CD4-positive, alpha-beta T cell (primary cell): ENCODE measurements at regions of chr1 and their contacts with region 1.

Region 1: GRCh38 chr1:24486331-24487065 is 16.1 kb upstream of the RCAN3 start:
- DNase-seq: peak in 12 of 14 experiments; percentile 24 to 84 (median 38)
- ATAC-seq: peak; percentile 46
- H3K4me3 ChIP-seq: peak overlapping the region; percentile 12
- H3K4me3 Mint-ChIP-seq: peak overlapping the region; percentile 77
- H3K27ac ChIP-seq: peak overlapping the region; percentile 43 to 68
- H3K27ac Mint-ChIP-seq: peak overlapping the region; percentile 98
- H3K4me1 ChIP-seq: peaks cover 78% of the 10 kb centered on the region
- H3K4me1 Mint-ChIP-seq: peaks cover 77% of the 10 kb centered on the region
- H3K27me3 ChIP-seq: no peaks in the 10 kb centered on the region
- H3K27me3 Mint-ChIP-seq: no peaks in the 10 kb centered on the region
- CTCF ChIP-seq: peak; percentile 7

Region 2: DNA sequence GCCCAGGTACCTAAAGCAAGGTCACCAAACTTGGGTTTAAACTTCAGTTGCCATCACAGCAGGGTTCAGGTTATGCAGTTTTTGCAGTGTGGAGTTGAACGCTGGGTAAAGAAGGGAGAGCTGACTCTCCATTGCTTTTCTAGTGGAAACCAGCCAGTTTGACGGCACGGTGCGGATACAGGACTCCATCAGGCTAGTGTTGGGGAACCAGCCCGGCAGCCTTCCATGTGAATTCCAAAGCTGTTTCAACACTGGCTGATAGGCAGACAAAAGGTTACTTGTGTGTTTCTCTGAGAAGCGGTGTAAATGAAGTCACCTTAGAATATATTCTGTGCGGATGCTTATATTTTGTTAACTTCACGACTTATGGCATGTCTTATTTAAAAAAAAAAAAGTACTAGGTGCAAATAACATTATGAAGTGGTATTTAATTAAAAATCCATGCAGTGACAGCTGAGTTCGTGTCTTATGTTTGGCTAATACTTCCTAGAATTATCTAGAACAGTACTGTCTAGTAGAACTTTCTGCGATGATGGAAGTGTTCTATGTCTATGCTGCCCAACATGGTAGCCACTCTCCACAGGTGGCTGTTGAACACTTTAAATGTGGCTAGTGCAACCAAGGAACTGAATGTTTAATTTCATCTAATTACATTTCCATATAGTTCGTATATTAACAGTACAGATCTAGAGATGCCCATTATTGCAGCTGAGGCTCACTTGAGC is 13.8 kb before region 1 on chr1:
- CTCF ChIA-PET with region 1: interaction called, 3 read pairs
- POLR2A ChIA-PET with region 1: interaction called, 16 read pairs
- intact Hi-C with region 1: no loop called
- DNase-seq: no peak
- ATAC-seq: no peak
- H3K4me3 ChIP-seq: no peak overlapping the region
- H3K4me3 Mint-ChIP-seq: no peak overlapping the region
- H3K27ac ChIP-seq: no peak overlapping the region
- H3K27ac Mint-ChIP-seq: peak overlapping the region; percentile 55
- H3K4me1 ChIP-seq: peaks cover 2% of the 10 kb centered on the region
- H3K4me1 Mint-ChIP-seq: peaks cover 51% of the 10 kb centered on the region
- H3K27me3 ChIP-seq: no peaks in the 10 kb centered on the region
- H3K27me3 Mint-ChIP-seq: no peaks in the 10 kb centered on the region
- CTCF ChIP-seq: no peak

Region 3: DNA sequence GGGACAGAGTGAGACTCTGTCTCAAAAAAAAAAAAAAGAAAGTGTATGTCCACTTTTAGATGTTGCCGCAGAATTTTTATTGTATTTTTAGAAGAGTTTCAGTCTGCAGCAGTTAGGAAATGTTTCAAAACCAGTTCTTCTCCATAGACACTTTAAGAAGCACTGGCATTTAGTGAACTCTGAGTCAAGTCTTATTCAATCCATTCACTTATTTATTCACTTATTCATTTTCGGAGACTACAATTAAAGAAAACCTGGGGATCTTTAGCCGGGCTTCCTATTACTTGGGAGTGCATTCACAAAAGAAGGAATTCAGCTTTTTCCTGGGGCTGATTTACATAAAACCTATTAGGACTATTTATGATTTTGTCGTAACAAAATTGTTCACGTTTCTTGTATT is 28.4 kb after region 1 on chr1:
- CTCF ChIA-PET with region 1: interaction called, 4 read pairs
- POLR2A ChIA-PET with region 1: interaction called, 692 read pairs
- intact Hi-C with region 1: no loop called
- DNase-seq: no peak
- ATAC-seq: no peak
- H3K4me3 ChIP-seq: no peak overlapping the region
- H3K4me3 Mint-ChIP-seq: no peak overlapping the region
- H3K27ac ChIP-seq: no peak overlapping the region
- H3K27ac Mint-ChIP-seq: peak overlapping the region; percentile 96
- H3K4me1 ChIP-seq: peaks cover 76% of the 10 kb centered on the region
- H3K4me1 Mint-ChIP-seq: peaks cover 81% of the 10 kb centered on the region
- H3K27me3 ChIP-seq: no peaks in the 10 kb centered on the region
- H3K27me3 Mint-ChIP-seq: no peaks in the 10 kb centered on the region
- CTCF ChIP-seq: no peak

Region 4: GRCh38 chr1:24526940-24527542 is 40.5 kb after region 1 on chr1:
- CTCF ChIA-PET with region 1: interaction called, 5 read pairs
- POLR2A ChIA-PET with region 1: interaction called, 11 read pairs
- intact Hi-C with region 1: loop called in 1 of 2 experiments (anchors 10 kb)
- DNase-seq: peak in 13 of 14 experiments; percentile 22 to 75 (median 42)
- ATAC-seq: peak; percentile 78
- H3K4me3 ChIP-seq: no peak overlapping the region
- H3K4me3 Mint-ChIP-seq: peak overlapping the region; percentile 45
- H3K27ac ChIP-seq: no peak overlapping the region
- H3K27ac Mint-ChIP-seq: peak overlapping the region; percentile 64
- H3K4me1 ChIP-seq: peaks cover 49% of the 10 kb centered on the region
- H3K4me1 Mint-ChIP-seq: peaks cover 76% of the 10 kb centered on the region
- H3K27me3 ChIP-seq: no peaks in the 10 kb centered on the region
- H3K27me3 Mint-ChIP-seq: no peaks in the 10 kb centered on the region
- CTCF ChIP-seq: peak; percentile 78

Region 5: DNA sequence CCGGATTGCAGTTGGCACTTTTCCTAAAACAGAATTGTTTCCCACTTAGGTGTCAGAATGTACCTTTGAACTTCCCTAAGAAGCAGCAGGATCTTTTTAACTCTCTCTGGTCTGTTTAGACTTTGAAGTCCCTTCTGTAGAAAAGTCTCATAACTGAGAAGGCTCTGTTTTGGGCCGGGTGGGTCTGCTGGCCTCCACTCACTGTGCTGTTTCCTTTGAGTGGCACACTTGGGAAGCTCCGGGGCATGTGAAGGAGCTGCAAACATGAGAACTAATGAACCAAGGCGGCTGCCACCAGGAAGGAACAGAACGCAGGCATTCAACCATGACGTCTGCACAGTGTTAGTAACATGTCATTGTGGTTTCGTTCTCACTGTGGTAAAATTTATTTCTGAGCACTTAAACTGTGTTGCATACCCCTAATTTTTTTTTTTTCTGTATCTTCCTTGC is 49.9 kb after region 1 on chr1:
- CTCF ChIA-PET with region 1: no interaction called
- POLR2A ChIA-PET with region 1: interaction called, 7 read pairs
- intact Hi-C with region 1: loop called (anchors 1 to 10 kb)
- DNase-seq: peak; percentile 41 to 94 (median 64)
- ATAC-seq: peak; percentile 80
- H3K4me3 ChIP-seq: no peak overlapping the region
- H3K4me3 Mint-ChIP-seq: peak overlapping the region; percentile 86
- H3K27ac ChIP-seq: peak overlapping the region; percentile 86 to 95
- H3K27ac Mint-ChIP-seq: peak overlapping the region; percentile 96
- H3K4me1 ChIP-seq: peaks cover 43% of the 10 kb centered on the region
- H3K4me1 Mint-ChIP-seq: peaks cover 79% of the 10 kb centered on the region
- H3K27me3 ChIP-seq: no peaks in the 10 kb centered on the region
- H3K27me3 Mint-ChIP-seq: no peaks in the 10 kb centered on the region
- CTCF ChIP-seq: no peak

Region 6: GRCh38 chr1:25148673-25149300 is 662.3 kb after region 1 on chr1:
- CTCF ChIA-PET with region 1: no interaction called
- POLR2A ChIA-PET with region 1: no interaction called
- intact Hi-C with region 1: no loop called
- DNase-seq: peak in 8 of 14 experiments; percentile 4 to 66 (median 28)
- ATAC-seq: peak; percentile 41
- H3K4me3 ChIP-seq: no peak overlapping the region
- H3K4me3 Mint-ChIP-seq: no peak overlapping the region
- H3K27ac ChIP-seq: no peak overlapping the region
- H3K27ac Mint-ChIP-seq: no peak overlapping the region
- H3K4me1 ChIP-seq: no peaks in the 10 kb centered on the region
- H3K4me1 Mint-ChIP-seq: no peaks in the 10 kb centered on the region
- H3K27me3 ChIP-seq: peaks cover 2 to 8% of the 10 kb centered on the region in 2 experiments
- H3K27me3 Mint-ChIP-seq: peaks cover 49% of the 10 kb centered on the region
- CTCF ChIP-seq: peak; percentile 55